GM10248 (cell line): ENCODE measurements at regions of chr5 and their contacts with region 1.

Region 1: GRCh38 chr5:14727428-14727865 is 62.9 kb downstream of the OTULIN start:
- DNase-seq: peak; percentile 77
- CTCF ChIP-seq: peak; percentile 81

Region 2: GRCh38 chr5:14491015-14491915 is 236.2 kb before region 1 on chr5:
- CTCF ChIA-PET with region 1: no interaction called
- POLR2A ChIA-PET with region 1: no interaction called
- DNase-seq: no peak
- CTCF ChIP-seq: no peak

Region 3: GRCh38 chr5:14706615-14707021 is 20.8 kb before region 1 on chr5:
- CTCF ChIA-PET with region 1: interaction called, 132 read pairs
- POLR2A ChIA-PET with region 1: no interaction called
- DNase-seq: no peak
- CTCF ChIP-seq: no peak

Region 4: GRCh38 chr5:14739538-14739937 is 12.1 kb after region 1 on chr5:
- CTCF ChIA-PET with region 1: interaction called, 31 read pairs
- POLR2A ChIA-PET with region 1: no interaction called
- DNase-seq: no peak
- CTCF ChIP-seq: no peak

Region 5: GRCh38 chr5:14801792-14802191 is 74.3 kb after region 1 on chr5:
- CTCF ChIA-PET with region 1: interaction called, 10 read pairs
- POLR2A ChIA-PET with region 1: no interaction called
- DNase-seq: no peak
- CTCF ChIP-seq: no peak

Region 6: GRCh38 chr5:14872070-14872989 is 144.9 kb after region 1 on chr5:
- CTCF ChIA-PET with region 1: interaction called, 10 read pairs
- POLR2A ChIA-PET with region 1: no interaction called
- DNase-seq: peak; percentile 57
- CTCF ChIP-seq: peak; percentile 30

Region 7: DNA sequence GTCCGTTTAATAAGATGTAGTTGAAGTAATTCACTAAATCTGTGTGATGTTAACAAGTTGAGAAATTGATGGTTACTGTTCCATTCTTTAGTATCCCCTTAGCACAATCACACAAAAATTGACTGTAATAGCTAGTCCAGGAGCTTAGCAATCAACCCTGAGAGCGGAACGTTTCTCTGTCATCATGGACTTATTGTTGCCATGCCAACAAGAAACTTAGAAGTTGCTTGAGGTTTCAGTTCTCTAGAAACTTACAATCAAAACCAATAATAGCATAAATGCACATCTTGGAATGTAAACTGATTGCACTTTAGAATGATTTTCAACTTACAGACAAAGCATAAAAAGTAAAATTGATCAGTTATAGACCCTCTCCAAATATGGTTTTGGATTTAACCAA is 269.6 kb after region 1 on chr5:
- CTCF ChIA-PET with region 1: interaction called, 147 read pairs
- POLR2A ChIA-PET with region 1: no interaction called
- DNase-seq: peak; percentile 41
- CTCF ChIP-seq: no peak

Region 8: DNA sequence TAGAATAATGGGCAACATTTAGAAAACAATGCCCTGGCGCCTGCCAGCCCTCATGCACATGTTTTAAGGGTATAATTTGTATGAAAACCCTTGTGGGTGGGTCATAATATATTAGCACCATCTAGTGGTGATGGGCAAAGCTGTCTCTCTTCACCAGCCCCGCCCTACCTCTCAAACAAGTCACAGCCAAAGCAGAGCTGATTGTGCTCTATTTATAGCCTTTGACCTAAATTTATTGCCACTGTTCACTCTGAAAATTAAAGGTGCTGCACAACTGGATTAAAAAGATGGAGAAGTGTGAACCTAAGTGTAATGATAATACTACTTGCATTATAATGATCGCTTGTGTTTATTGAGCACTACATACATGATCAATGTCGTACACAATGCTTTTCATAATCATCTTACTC is 276.1 kb after region 1 on chr5:
- CTCF ChIA-PET with region 1: interaction called, 147 read pairs
- POLR2A ChIA-PET with region 1: no interaction called
- DNase-seq: peak; percentile 62
- CTCF ChIP-seq: peak; percentile 72

Region 9: GRCh38 chr5:15215056-15215455 is 487.6 kb after region 1 on chr5:
- CTCF ChIA-PET with region 1: no interaction called
- POLR2A ChIA-PET with region 1: no interaction called
- DNase-seq: no peak
- CTCF ChIP-seq: no peak

Region 10: GRCh38 chr5:15366676-15367391 is 639.4 kb after region 1 on chr5:
- CTCF ChIA-PET with region 1: no interaction called
- POLR2A ChIA-PET with region 1: no interaction called
- DNase-seq: no peak
- CTCF ChIP-seq: no peak